ENCODE measurements at regions of chr3 and their contacts with region 1.

Region 1: DNA sequence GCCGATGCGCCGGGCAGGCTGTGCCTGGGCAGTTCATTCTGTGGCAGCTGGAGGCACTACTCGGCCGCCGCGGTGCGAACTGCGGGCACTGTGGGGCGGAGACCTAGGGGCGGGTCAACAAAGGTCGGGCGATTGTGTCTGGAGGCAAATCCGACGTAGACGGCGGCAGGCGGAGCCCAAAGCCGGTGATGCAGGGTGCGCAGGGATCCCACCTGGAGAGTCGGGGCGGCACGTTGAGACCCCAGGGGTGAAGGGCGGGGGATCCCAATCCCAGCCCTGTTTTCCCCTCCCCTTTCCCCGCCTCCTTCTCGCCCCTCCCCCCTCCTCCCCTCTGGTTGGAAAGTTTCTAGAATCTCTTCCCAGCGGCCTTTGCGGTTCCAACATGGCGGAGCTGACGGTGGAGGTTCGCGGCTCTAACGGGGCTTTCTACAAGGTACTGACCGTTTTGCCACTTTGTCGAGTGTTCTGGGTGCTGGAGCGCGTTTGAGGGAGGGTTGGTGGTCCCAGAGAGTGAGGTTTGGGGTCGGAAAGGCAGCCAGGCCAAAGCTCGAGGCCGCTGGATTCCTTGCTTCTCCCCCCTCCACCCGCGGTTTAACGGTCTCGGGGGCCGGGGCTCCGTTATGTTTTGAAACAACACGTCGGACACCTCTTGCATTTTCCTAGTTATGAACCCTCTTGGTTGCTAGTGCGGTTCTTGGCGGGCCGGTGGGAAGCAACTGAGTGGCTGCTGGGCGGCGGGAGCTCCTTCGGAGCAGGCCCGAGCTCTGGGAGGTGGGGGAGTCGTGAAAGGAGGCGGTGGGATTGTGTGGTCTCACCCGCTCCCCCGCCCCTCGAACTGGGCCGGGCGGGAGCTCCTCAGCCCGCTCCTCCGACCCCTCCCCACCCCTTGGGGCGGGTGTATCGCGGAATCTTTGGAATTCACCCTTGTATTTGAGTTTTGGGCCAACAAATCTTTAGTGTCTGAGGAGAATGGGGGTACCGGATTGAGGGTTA is at the start of gene FXR1:
- DNase-seq: peak; percentile 90
- ATAC-seq: peak; percentile 95
- H3K4me3 Mint-ChIP-seq: peak within 1 kb of the TSS; percentile 94
- H3K27ac Mint-ChIP-seq: peak within 1 kb of the TSS; percentile 95
- H3K4me1 Mint-ChIP-seq: peaks cover 52% of the 10 kb centered on the region
- H3K27me3 Mint-ChIP-seq: no peaks in the 10 kb centered on the region
- CTCF ChIP-seq: no peak
- total RNA-seq, gene FXR1: 130 TPM in 2 replicates

Region 2: DNA sequence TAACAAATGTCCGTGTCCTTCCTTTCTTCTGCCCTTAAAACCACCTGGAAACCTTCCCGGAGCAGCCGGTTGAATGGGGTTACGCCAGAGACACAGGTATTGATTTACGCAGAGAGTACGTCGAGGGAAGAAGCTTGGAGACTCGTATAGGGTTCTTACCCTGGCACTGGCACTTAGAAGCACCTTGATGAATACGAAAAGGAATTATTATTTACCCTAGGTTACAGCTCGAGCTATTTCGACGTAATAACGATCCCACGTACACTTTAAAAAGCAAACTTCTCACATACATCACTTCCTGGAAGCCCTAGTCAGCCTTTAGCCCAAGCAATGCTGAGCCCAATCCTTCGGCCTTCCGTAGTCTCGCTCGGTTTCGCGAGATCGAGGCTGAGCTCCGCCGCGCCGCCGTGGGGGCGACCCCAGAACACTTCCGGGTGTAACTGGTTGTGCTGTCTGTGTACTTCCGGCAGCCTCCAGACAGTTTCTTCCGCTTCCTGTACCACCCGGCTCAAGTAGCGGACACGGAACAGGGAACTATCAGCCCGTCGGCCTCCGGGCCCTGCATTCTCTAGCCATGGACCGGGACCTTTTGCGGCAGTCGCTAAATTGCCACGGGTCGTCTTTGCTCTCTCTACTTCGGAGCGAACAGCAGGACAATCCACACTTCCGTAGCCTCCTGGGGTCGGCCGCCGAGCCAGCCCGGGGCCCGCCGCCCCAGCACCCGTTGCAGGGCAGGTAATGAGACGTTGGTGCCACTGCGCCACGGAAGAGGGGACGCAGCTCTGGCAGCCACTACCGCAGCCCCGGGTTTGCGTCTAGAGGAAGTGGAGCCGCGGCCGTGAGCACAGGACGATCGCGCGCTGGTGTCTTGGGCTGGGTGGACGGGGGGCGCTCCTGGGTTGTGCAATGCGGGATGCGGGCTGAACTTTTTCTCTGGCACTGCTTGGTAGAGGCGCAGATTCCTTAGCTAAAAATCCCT is 310.6 kb before region 1 on chr3 and contains the start of gene TTC14:
- CTCF ChIA-PET with region 1: interaction called, 3 read pairs
- POLR2A ChIA-PET with region 1: interaction called, 36 read pairs
- intact Hi-C with region 1: loop called (anchors 1 kb)
- DNase-seq: peak; percentile 81
- ATAC-seq: peak; percentile 91
- H3K4me3 Mint-ChIP-seq: peak within 1 kb of the TSS; percentile 97
- H3K27ac Mint-ChIP-seq: peak within 1 kb of the TSS; percentile 95
- H3K4me1 Mint-ChIP-seq: peaks cover 22% of the 10 kb centered on the region
- H3K27me3 Mint-ChIP-seq: peaks cover 5% of the 10 kb centered on the region
- CTCF ChIP-seq: no peak
- total RNA-seq, gene TTC14: 81.5 and 82.2 TPM in 2 replicates

Region 3: DNA sequence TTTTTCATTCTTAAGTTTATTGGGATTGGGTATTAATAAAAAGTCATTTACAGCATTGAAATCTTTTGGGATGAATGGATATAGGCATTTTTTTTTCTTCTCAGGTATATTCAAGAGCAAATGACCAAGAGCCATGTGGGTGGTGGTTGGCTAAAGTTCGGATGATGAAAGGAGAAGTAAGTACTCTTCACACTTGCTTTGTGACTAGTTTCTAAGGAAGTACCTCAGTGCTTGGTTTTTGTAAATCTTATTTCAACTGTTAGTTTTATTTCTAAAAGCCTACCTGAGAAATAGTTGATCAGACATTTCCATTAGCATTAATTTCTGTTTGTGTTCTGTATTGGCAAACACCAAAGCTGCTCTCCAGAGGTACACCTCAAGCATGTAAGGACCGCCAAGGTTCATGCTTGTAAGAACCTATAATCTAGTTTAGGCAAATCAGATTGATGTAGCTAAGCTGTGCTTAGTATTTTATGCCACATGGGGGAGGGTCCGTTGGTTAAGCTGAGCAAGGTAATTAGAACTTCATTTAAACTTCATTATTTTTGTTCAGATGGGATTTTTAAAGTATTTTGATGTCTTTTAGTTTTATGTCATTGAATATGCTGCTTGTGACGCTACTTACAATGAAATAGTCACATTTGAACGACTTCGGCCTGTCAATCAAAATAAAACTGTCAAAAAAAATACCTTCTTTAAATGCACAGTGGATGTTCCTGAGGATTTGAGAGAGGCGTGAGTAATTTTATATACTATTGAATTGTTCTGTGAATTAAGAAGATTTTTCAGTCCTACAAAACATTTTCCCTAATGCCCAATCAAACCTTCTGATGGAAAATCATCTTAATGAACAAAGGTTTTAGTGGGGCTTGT is 35.4 kb after region 1 on chr3:
- CTCF ChIA-PET with region 1: no interaction called
- POLR2A ChIA-PET with region 1: interaction called, 6 read pairs
- intact Hi-C with region 1: loop called (anchors 2 kb)
- DNase-seq: no peak
- ATAC-seq: peak; percentile 71
- H3K4me3 Mint-ChIP-seq: no peak overlapping the region
- H3K27ac Mint-ChIP-seq: peak overlapping the region; percentile 59
- H3K4me1 Mint-ChIP-seq: peaks cover 17% of the 10 kb centered on the region
- H3K27me3 Mint-ChIP-seq: no peaks in the 10 kb centered on the region
- CTCF ChIP-seq: no peak

Region 4: GRCh38 chr3:180989291-180990163 is 76.9 kb after region 1 on chr3 and contains the start of gene DNAJC19:
- CTCF ChIA-PET with region 1: interaction called, 3 read pairs
- POLR2A ChIA-PET with region 1: interaction called, 9 read pairs
- intact Hi-C with region 1: loop called (anchors 1 kb)
- DNase-seq: peak; percentile 77
- ATAC-seq: peak; percentile 97
- H3K4me3 Mint-ChIP-seq: peak within 1 kb of the TSS; percentile 98
- H3K27ac Mint-ChIP-seq: peak within 1 kb of the TSS; percentile 92
- H3K4me1 Mint-ChIP-seq: peaks cover 32% of the 10 kb centered on the region
- H3K27me3 Mint-ChIP-seq: peaks cover 7% of the 10 kb centered on the region
- CTCF ChIP-seq: no peak
- total RNA-seq, gene DNAJC19: 40.3 and 53.1 TPM in 2 replicates

Region 5: GRCh38 chr3:181210275-181210674 is 297.7 kb after region 1 on chr3:
- CTCF ChIA-PET with region 1: no interaction called
- POLR2A ChIA-PET with region 1: no interaction called
- intact Hi-C with region 1: no loop called
- DNase-seq: no peak
- ATAC-seq: no peak
- H3K4me3 Mint-ChIP-seq: no peak overlapping the region
- H3K27ac Mint-ChIP-seq: no peak overlapping the region
- H3K4me1 Mint-ChIP-seq: no peaks in the 10 kb centered on the region
- H3K27me3 Mint-ChIP-seq: peaks cover 6% of the 10 kb centered on the region
- CTCF ChIP-seq: no peak

Region 6: GRCh38 chr3:181326637-181327223 is 414.1 kb after region 1 on chr3:
- CTCF ChIA-PET with region 1: interaction called, 3 read pairs
- POLR2A ChIA-PET with region 1: no interaction called
- intact Hi-C with region 1: loop called (anchors 2 kb)
- DNase-seq: no peak
- ATAC-seq: no peak
- H3K4me3 Mint-ChIP-seq: no peak overlapping the region
- H3K27ac Mint-ChIP-seq: no peak overlapping the region
- H3K4me1 Mint-ChIP-seq: no peaks in the 10 kb centered on the region
- H3K27me3 Mint-ChIP-seq: peaks cover 2% of the 10 kb centered on the region
- CTCF ChIP-seq: no peak

Measured in activated B cell treated with CpG ODN at 0.5 μM for 24 hours (primary cell).